HEK293T (cell line): ENCODE measurements at regions of chr6 and their contacts with region 1.

Region 1: GRCh38 chr6:28266962-28267694 is at the start of gene ZSCAN26:
- DNase-seq: peak; percentile 79

Region 2: GRCh38 chr6:28218271-28219248 is 48.6 kb before region 1 on chr6:
- CTCF ChIA-PET with region 1: no interaction called
- POLR2A ChIA-PET with region 1: interaction called, 20 read pairs
- DNase-seq: peak; percentile 67

Region 3: GRCh38 chr6:28252009-28252975 is 14.8 kb before region 1 on chr6 and contains the start of gene ZKSCAN4:
- CTCF ChIA-PET with region 1: no interaction called
- POLR2A ChIA-PET with region 1: interaction called, 100 read pairs
- DNase-seq: peak; percentile 88

Region 4: GRCh38 chr6:28281288-28282064 is 14.3 kb after region 1 on chr6 and contains the start of gene PGBD1:
- CTCF ChIA-PET with region 1: interaction called, 5 read pairs
- POLR2A ChIA-PET with region 1: interaction called, 26 read pairs
- DNase-seq: peak; percentile 87

Region 5: DNA sequence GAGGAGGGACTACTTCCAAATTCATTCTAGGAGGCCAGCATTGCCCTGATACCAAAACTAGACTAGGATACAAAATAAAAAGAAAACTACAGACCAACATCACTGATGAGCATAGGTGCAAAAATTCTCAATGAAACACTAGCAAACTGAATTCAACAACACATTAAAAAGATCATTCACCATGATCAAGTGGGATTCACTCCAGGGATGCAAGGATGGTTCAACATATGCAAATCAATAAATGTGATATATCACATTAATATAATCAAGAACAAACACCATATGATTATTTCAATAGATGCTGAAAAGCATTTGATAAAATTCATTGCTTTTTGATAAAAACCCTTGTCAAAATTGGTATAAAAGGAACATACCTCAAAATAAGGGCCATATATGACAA is 24.4 kb after region 1 on chr6:
- CTCF ChIA-PET with region 1: no interaction called
- POLR2A ChIA-PET with region 1: no interaction called
- DNase-seq: no peak

Region 6: GRCh38 chr6:28349892-28350737 is 83.0 kb after region 1 on chr6 and contains the start of gene ZKSCAN3:
- CTCF ChIA-PET with region 1: no interaction called
- POLR2A ChIA-PET with region 1: interaction called, 11 read pairs
- DNase-seq: peak; percentile 81